Activated CD8-positive, alpha-beta memory T cell treated with anti-CD3 and anti-CD28 coated beads, Interleukin-2, amount 10 ng/mL, durations not matched to agents 7 days and 5 days (primary cell): ENCODE measurements at regions of chr2 and their contacts with region 1.

Region 1: GRCh38 chr2:28566521-28567041 is 70.7 kb downstream of the PLB1 start:
- DNase-seq: peak; percentile 91
- ATAC-seq: peak; percentile 95
- H3K4me3 Mint-ChIP-seq: peak overlapping the region; percentile 84
- H3K27ac Mint-ChIP-seq: peak overlapping the region; percentile 84
- H3K4me1 Mint-ChIP-seq: peaks cover 22% of the 10 kb centered on the region
- H3K27me3 Mint-ChIP-seq: peaks cover 16% of the 10 kb centered on the region

Region 2: DNA sequence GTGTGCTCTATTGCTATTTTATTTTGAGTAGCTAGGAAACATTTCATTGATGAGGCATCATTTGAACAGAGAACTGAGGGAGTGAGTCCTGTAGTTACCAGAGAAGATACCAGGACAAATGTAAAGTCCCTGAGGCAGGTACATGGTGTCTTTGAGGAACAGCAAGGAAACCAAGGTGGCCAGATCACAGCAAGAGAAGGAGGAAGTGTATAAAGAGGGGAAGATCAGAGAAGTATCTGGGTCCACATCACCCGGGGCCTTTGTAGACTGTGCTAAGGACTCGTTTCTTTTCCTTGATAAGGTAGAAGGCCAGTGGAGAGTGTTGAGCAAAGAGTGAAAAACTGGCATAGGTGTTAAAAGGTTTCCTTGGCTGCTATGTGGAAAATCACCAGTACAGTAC is 105.5 kb before region 1 on chr2:
- CTCF ChIA-PET with region 1: no interaction called
- DNase-seq: no peak
- ATAC-seq: no peak
- H3K4me3 Mint-ChIP-seq: no peak overlapping the region
- H3K27ac Mint-ChIP-seq: no peak overlapping the region
- H3K4me1 Mint-ChIP-seq: peaks cover 27% of the 10 kb centered on the region
- H3K27me3 Mint-ChIP-seq: peaks cover 13% of the 10 kb centered on the region

Region 3: DNA sequence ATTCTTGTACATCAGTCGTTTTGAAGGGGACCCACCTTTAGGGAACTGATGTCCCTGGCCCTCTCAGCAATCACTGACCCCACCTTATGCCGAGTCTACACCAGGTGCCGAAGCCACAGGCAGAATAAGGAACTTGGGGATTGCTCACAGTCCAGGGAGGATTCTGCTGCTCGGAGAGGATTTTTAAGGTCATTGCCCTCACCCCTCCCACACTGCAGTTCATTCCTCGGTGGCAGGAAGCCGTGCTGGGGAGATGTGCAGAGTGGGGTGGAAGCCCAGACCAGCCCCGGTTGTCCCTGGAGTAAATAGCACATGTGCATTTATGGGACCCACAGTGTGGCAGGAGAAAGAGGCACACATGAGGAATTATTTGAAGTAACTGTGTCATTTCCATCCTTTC is 20.3 kb before region 1 on chr2:
- CTCF ChIA-PET with region 1: interaction called, 17 read pairs
- DNase-seq: no peak
- ATAC-seq: no peak
- H3K4me3 Mint-ChIP-seq: no peak overlapping the region
- H3K27ac Mint-ChIP-seq: peak overlapping the region; percentile 84
- H3K4me1 Mint-ChIP-seq: peaks cover 66% of the 10 kb centered on the region
- H3K27me3 Mint-ChIP-seq: no peaks in the 10 kb centered on the region

Region 4: GRCh38 chr2:28577791-28578680 is 11.5 kb after region 1 on chr2:
- CTCF ChIA-PET with region 1: interaction called, 12 read pairs
- DNase-seq: no peak
- ATAC-seq: no peak
- H3K4me3 Mint-ChIP-seq: no peak overlapping the region
- H3K27ac Mint-ChIP-seq: no peak overlapping the region
- H3K4me1 Mint-ChIP-seq: no peaks in the 10 kb centered on the region
- H3K27me3 Mint-ChIP-seq: peaks cover 2% of the 10 kb centered on the region

Region 5: DNA sequence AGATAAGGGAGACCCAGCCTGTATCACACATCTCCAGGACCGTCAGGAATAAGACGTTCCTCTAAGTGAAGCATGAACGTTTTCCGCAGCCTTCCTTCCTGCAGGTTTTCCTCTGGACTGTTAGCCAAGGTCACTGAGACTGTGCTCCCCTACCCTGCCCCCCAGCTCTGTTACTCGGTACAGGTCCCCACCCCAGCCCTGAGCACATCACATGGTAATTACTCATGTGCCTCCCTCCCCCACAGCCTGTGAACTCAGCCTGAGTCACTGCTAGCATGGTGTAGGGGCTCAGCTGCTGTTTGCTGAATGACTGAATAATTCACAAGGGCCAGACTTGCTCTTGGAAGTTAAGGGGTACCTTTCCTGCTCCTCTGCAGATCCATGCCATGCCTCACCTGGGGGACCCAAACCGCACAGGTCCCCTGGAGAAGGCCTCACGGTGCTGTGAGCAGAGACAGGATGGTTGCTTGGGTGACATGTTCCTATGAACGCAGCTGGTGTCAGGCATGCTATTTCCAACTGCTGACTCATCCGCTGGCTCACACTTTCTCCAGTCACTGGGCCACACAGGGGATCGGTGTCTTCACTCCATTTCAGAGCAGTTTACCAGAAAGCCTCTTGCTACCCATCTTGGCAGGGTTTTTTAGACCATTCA is 17.4 kb after region 1 on chr2:
- CTCF ChIA-PET with region 1: interaction called, 19 read pairs
- DNase-seq: peak; percentile 71
- ATAC-seq: peak; percentile 76
- H3K4me3 Mint-ChIP-seq: no peak overlapping the region
- H3K27ac Mint-ChIP-seq: no peak overlapping the region
- H3K4me1 Mint-ChIP-seq: peaks cover 41% of the 10 kb centered on the region
- H3K27me3 Mint-ChIP-seq: no peaks in the 10 kb centered on the region

Region 6: DNA sequence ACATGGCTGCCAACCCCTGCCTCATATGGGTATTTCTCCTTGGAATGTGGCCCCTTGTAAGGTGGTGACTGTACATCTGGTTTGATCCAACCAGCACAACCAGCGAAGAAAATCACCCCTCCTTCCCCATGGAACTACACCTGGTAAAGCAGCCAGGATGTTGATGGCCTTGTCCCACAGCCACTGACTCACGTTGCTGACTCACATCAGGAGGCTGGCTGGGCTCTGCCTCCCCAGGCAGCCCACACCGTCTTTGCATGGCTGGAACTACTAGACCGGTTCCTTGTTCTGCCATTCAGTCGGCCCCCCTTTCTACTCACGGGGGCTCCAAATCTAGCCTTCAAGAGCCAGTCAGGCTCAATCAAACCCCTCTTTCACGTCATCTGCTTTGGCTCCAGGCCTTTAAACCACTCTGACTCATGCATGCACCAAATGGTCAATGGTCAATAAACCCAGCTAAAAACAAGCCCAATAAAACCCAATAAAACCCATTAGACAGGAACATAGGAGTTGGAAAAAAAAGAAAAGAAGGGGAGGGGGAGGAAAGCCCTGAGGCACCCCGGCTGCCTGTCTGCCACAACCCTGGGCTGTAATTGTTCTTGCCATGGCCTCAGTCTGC is 44.1 kb after region 1 on chr2:
- CTCF ChIA-PET with region 1: interaction called, 11 read pairs
- DNase-seq: peak; percentile 72
- ATAC-seq: peak; percentile 63
- H3K4me3 Mint-ChIP-seq: no peak overlapping the region
- H3K27ac Mint-ChIP-seq: peak overlapping the region; percentile 50
- H3K4me1 Mint-ChIP-seq: peaks cover 24% of the 10 kb centered on the region
- H3K27me3 Mint-ChIP-seq: no peaks in the 10 kb centered on the region

Region 7: DNA sequence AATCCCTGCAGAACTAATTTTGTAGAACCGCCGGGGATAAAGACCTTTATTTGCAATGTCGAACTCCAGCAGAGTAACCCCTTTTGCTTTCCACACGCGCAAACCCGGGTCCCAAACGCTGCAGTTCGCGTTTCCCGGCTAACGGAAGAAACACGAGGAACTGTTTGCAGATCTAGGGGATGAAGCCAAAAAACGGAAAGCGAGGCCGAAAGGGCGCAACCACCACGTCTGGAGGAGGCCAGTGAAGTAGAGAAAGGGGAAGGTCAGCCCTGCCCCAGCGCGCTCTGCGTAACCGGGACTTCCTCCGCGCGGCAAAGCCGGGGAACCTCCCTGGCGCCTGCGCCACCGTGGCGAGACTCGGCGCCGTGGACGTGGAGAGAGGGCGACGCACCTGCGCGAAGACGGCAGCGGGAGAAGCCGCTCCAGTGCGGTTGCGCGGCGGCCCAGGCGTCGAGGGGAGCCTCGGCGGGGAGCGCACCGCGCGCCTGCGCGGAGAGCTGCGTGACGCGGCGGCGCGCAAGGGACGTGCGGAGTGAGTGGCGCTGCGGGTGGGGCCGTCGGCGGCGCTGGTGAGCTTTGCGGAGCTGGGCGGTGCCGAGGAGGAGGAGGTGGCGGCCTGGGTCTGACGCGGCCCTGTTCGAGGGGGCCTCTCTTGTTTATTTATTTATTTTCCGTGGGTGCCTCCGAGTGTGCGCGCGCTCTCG is 184.8 kb after region 1 on chr2 and contains the start of gene PPP1CB:
- CTCF ChIA-PET with region 1: interaction called, 11 read pairs
- DNase-seq: peak; percentile 95
- ATAC-seq: peak; percentile 86
- H3K4me3 Mint-ChIP-seq: peak within 1 kb of the TSS; percentile 91
- H3K27ac Mint-ChIP-seq: peak within 1 kb of the TSS; percentile 97
- H3K4me1 Mint-ChIP-seq: peaks cover 55% of the 10 kb centered on the region
- H3K27me3 Mint-ChIP-seq: no peaks in the 10 kb centered on the region
- total RNA-seq, gene PPP1CB: 153 to 218 TPM

Region 8: DNA sequence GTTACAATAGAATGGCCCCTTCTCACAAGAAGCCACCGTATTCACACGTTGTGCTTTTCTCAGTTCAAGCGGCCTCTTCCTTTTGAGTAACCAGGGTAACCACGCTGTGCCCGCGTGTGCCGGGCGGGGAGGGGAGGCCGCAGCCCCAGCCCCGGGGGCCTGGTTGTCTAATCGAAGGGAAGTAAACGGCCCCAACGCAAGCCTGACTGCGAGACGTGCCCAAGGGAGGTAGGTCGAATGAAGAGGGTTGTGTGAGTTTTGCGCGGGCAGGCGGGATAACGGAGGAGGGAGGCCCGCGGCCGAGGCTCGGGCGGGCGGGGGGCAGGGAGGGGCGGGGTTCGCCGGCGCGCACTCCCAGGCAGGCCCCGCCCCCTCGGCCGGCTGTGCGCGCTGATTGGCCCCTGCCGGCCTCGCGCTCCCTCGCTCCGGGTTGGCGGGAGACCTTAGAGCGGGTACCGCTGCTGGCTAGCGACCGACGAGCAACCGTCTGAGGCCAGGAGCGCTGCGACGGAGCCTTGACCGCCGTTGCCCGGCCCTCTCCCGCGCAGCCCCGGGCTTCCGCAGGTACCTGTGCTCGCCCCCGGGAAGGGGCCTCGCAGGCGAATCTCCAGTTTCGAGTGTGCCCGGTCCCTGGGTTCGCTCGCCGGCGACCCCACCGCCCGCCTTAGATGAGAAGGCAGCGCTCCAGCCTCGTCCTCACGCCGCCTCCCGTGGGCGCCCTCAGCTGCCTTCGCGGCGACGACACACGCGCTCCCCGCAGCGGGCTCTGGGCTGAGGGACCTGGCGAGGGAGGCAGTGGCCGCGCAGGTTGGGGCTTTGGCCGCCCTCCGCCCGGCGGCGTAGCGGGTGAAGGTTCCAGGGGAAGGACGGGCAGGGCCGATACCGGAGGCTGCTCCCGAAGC is 244.1 kb after region 1 on chr2 and contains the start of gene SPDYA:
- CTCF ChIA-PET with region 1: interaction called, 12 read pairs
- DNase-seq: peak; percentile 88
- ATAC-seq: peak; percentile 97
- H3K4me3 Mint-ChIP-seq: peak within 1 kb of the TSS; percentile 70
- H3K27ac Mint-ChIP-seq: peak within 1 kb of the TSS; percentile 61
- H3K4me1 Mint-ChIP-seq: peaks cover 17% of the 10 kb centered on the region
- H3K27me3 Mint-ChIP-seq: peaks cover 3% of the 10 kb centered on the region
- total RNA-seq, gene SPDYA: 1.6 TPM

Region 9: DNA sequence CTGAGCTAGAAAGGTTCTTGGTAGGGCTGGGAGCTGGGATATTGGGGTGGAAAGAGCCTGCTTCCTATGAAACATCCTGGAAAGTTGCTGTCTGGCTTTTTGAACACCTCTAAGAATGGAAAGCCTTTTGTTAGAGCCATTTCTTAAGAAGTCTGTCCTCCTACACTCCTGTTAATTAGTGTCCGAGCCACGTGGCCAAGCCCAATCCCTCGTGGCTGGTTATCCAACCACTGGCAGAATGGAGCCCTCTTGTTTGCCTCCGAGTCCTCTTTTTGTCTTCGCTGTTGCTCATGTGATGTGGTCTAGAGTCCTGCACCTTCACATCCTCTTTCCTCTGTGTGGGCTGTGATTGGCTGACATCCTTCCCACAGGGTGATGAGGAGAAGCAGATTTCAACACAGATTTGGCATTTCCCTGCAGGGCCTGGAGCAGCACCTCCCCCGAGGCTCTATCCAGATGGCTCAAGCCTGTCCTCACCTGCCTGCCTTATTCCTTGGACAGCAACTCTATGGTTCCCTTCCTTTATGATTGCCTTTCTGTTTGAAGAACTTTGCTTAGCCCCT is 406.3 kb after region 1 on chr2:
- CTCF ChIA-PET with region 1: no interaction called
- DNase-seq: no peak
- ATAC-seq: no peak
- H3K4me3 Mint-ChIP-seq: no peak overlapping the region
- H3K27ac Mint-ChIP-seq: no peak overlapping the region
- H3K4me1 Mint-ChIP-seq: peaks cover 10% of the 10 kb centered on the region
- H3K27me3 Mint-ChIP-seq: peaks cover 4% of the 10 kb centered on the region

Region 10: DNA sequence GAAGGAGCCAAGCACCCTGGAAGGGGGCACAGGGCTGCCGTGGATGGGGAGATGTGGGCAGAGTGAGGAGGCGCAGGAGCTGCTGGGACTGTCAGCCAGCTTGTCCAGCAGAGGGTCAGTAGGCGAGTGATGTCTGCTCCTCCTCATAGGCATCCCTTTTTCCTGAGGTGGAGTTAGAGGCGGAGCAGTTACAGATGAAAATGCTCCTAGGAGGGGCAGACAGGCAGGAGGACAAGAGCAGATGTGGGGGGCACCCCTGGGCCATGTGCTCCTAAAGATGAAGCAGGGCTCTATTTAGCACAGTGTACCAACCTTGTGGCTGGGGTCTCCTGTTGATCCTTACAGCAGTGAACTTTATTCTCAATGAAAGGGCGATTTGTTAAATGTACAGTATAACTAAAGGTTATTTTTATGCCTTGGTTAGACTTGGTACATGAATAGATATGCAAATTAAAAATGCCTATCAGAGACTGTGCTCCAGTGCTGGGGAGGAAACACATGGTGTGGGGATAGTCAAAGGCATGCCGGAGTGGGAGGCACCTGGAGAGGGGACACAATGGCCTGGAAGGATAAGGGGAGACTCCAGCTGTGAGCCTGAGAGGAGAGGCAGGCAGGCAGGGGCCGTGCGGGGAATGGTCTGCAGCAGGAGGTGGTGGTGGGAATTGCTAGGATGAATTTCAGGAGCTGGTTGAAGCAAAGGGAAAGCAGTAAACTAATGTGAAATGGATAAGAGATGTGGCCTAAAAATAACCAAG is 723.9 kb after region 1 on chr2:
- CTCF ChIA-PET with region 1: no interaction called
- DNase-seq: no peak
- ATAC-seq: no peak
- H3K4me3 Mint-ChIP-seq: no peak overlapping the region
- H3K27ac Mint-ChIP-seq: no peak overlapping the region
- H3K4me1 Mint-ChIP-seq: no peaks in the 10 kb centered on the region
- H3K27me3 Mint-ChIP-seq: peaks cover 26% of the 10 kb centered on the region